Breast epithelium (tissue), 4 donors: ENCODE measurements at regions of chr18 and their contacts with region 1.

Region 1: GRCh38 chr18:54961016-54961423 is 1.8 kb upstream of the CCDC68 start:
- DNase-seq: no peak
- H3K4me3 ChIP-seq: no peak overlapping the region
- H3K27ac ChIP-seq: no peak overlapping the region
- H3K4me1 ChIP-seq: no peaks in the 10 kb centered on the region
- H3K27me3 ChIP-seq: no peaks in the 10 kb centered on the region
- CTCF ChIP-seq: no peak
- POLR2A ChIP-seq: no peak

Region 2: DNA sequence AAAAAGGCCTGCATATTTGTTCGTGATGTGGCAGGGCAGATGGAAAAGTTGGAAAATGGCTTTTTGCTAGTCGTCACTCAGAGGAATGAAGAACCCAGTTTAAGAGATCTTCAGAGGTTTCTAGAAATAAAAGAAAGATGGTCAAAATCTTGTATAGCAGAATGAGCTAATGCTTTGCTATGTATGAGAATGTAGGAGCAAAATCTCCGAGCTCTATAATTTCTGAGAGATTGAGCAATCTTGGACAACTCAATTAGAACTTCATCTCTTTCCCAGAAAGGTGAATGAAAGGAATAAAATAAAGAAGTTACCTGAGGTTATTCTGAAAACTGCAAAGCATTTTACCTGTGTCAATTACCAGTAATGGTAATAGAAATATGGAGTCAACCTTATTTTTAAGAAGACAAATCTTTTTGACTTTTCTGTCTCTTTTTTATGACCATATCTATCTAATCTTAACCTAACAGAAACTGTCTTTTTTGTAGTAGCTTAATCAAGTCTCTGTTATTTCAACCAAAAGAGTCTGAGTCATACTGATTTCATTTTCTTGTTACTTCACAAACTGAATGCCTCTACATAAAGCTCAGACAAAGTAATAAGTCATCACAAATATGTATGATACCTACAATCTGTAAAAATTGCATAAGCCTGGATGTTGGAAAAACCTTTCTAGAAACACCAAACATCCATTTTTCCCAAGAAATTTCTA is 34.3 kb before region 1 on chr18:
- intact Hi-C with region 1: no loop called
- DNase-seq: no peak
- H3K4me3 ChIP-seq: no peak overlapping the region
- H3K27ac ChIP-seq: no peak overlapping the region
- H3K4me1 ChIP-seq: no peaks in the 10 kb centered on the region
- H3K27me3 ChIP-seq: no peaks in the 10 kb centered on the region
- CTCF ChIP-seq: no peak
- POLR2A ChIP-seq: no peak

Region 3: DNA sequence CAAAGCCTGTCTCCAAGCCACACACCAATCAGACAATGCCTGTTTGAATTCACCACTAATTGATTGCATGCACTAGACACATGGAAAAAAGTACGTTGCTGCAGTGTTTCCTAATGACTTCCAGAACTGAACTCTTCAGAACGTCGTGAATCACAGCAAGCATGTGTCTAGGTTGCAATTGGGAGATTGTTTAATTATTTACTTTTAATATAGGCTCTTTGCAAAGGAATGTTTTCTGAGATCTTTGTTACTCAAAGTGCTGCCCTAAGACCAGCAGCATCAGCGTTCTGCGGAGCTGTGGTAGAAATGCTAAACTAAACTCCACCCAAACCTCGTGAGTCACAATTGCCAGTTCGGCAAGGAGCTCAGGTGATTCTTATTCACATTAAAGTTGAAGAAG is 51.0 kb after region 1 on chr18:
- intact Hi-C with region 1: loop called (anchors 2 kb)
- DNase-seq: no peak
- H3K4me3 ChIP-seq: no peak overlapping the region
- H3K27ac ChIP-seq: no peak overlapping the region
- H3K4me1 ChIP-seq: no peaks in the 10 kb centered on the region
- H3K27me3 ChIP-seq: no peaks in the 10 kb centered on the region
- CTCF ChIP-seq: no peak
- POLR2A ChIP-seq: no peak